ENCODE measurements at regions of chr15 and their contacts with region 1.

Region 1: GRCh38 chr15:31311735-31312619 is 14.7 kb upstream of the KLF13 start:
- DNase-seq: no peak
- H3K4me3 ChIP-seq: no peak overlapping the region
- H3K27ac ChIP-seq: no peak overlapping the region
- H3K4me1 ChIP-seq: no peaks in the 10 kb centered on the region
- H3K27me3 ChIP-seq: no peaks in the 10 kb centered on the region
- CTCF ChIP-seq: no peak

Region 2: GRCh38 chr15:31295658-31296057 is 16.3 kb before region 1 on chr15:
- CTCF ChIA-PET with region 1: interaction called, 3 read pairs
- POLR2A ChIA-PET with region 1: interaction called, 12 read pairs
- intact Hi-C with region 1: no loop called
- DNase-seq: no peak
- H3K4me3 ChIP-seq: no peak overlapping the region
- H3K27ac ChIP-seq: no peak overlapping the region
- H3K4me1 ChIP-seq: no peaks in the 10 kb centered on the region
- H3K27me3 ChIP-seq: peaks cover 19% of the 10 kb centered on the region
- CTCF ChIP-seq: no peak

Measured in A673 (cell line).